ENCODE measurements at regions of chr2 and their contacts with region 1.

Region 1: DNA sequence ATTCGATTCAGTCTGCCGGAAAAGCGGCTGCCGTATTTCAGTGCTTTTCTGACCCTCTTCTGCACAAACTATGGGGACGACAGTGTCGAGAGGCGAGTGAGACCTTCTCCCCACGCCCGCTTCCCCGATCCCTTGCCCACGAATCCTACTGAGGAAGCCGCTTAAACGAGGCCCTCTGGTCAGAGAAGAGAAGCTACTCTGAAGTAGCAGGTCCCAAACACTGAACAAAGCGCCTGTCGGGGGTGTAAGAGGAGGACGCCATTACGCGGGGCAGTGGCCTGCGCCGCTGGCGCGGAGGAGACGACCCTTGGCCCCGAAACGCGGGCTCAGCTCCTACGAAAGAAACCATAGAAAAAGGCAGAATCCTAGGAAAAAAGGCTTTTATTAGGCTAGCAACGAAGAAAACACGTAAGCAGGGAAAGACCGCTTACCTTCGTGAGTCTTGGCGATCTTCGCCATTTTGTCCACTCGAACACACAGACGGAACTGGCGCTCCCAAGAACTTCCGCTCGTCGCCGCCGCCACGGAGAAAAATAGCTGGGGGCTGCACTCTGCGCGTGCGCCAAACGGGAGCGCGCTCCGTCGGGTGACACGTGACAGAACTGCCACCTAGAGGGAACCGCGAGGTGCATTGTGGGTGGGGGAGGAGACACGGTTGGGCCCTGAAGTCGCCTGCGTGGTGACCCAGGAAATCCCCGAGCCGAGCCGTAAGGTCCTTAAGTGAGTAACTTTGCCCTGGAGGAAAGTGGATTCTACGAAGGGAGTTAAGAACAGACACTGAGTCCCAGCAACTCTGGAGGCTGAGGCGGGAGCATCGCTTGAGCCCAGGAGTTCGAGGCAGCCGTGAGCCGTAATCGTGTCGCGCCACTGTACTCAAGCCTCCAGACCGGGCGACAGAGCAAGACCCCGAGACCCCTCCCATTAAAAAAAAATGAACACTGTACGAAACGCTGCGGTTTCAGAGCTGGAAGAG is at the start of gene SF3B1:
- DNase-seq: peak; percentile 97 to 100 (median 99)
- ATAC-seq: peak; percentile 94 to 97 (median 95)
- H3K4me3 ChIP-seq: peak within 1 kb of the TSS; percentile 79 to 100
- H3K4me3 Mint-ChIP-seq: peak within 1 kb of the TSS; percentile 94 to 99 (median 99)
- H3K27ac ChIP-seq: peak within 1 kb of the TSS; percentile 99
- H3K27ac Mint-ChIP-seq: peak within 1 kb of the TSS; percentile 100
- H3K4me1 ChIP-seq: peaks cover 30 to 31% of the 10 kb centered on the region in 2 experiments
- H3K4me1 Mint-ChIP-seq: peaks cover 55 to 58% (median 55%) of the 10 kb centered on the region in 3 donors
- H3K27me3 ChIP-seq: no peaks in the 10 kb centered on the region
- H3K27me3 Mint-ChIP-seq: no peaks in the 10 kb centered on the region
- total RNA-seq, gene SF3B1: 468 to 579 (median 497) TPM

Region 2: GRCh38 chr2:197345846-197346370 is 88.9 kb before region 1 on chr2:
- CTCF ChIA-PET with region 1: no interaction called
- POLR2A ChIA-PET with region 1: interaction called in 1 of 2 experiments, 10 read pairs
- DNase-seq: no peak
- ATAC-seq: no peak
- H3K4me3 ChIP-seq: no peak overlapping the region
- H3K4me3 Mint-ChIP-seq: no peak overlapping the region
- H3K27ac ChIP-seq: no peak overlapping the region
- H3K27ac Mint-ChIP-seq: no peak overlapping the region
- H3K4me1 ChIP-seq: no peaks in the 10 kb centered on the region
- H3K4me1 Mint-ChIP-seq: peaks cover 5 to 11% (median 9%) of the 10 kb centered on the region in 3 donors
- H3K27me3 ChIP-seq: no peaks in the 10 kb centered on the region
- H3K27me3 Mint-ChIP-seq: no peaks in the 10 kb centered on the region

Region 3: DNA sequence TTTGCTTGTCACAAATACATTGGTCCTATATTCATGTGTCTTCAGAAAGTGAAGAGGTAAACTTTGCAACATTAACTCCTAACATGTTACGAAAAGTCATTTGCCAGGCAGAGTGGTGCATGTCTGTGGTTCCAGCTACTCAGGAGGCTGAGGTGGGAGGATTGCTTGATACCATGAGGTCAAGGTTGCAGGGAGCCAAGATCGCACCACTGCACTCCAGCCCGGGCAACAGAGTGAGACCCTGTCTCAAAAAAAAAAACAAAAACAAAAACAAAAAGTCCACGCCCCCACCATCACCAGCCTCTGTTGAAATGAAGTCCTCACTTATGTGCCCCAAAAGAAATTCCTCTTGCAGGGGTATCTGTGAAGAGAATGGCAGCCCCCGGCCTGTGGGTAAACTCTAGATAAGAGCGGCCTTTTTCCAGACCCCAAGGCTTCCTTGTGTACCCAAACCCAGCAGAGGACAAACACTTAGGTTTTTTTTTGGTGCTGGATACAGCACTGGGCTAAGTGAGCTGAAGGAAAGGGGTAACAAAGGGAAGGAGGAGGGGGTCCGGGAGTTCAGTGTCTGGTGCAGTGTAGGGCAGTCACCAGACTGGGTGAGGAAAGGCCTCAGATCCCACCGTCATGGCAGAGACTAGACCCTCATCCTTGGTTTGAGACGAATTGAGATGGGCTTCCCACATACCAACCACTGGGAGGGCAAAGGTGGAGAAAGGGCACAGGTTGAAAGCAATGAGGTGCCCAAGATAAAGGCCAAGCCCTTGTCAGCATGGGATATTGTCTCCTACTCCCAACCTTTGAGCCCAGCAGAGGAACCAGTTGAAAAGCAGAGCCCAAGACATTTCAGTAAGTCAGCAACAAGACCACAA is 45.6 kb after region 1 on chr2:
- CTCF ChIA-PET with region 1: interaction called in 1 of 2 experiments, 7 read pairs
- POLR2A ChIA-PET with region 1: interaction called in 1 of 2 experiments, 16 read pairs
- DNase-seq: no peak
- ATAC-seq: peak in 1 of 4 experiments; percentile 26
- H3K4me3 ChIP-seq: no peak overlapping the region
- H3K4me3 Mint-ChIP-seq: no peak overlapping the region
- H3K27ac ChIP-seq: no peak overlapping the region
- H3K27ac Mint-ChIP-seq: peak overlapping the region in 1 of 2 donors; percentile 39
- H3K4me1 ChIP-seq: no peaks in the 10 kb centered on the region
- H3K4me1 Mint-ChIP-seq: no peaks in the 10 kb centered on the region
- H3K27me3 ChIP-seq: no peaks in the 10 kb centered on the region
- H3K27me3 Mint-ChIP-seq: no peaks in the 10 kb centered on the region

Region 4: DNA sequence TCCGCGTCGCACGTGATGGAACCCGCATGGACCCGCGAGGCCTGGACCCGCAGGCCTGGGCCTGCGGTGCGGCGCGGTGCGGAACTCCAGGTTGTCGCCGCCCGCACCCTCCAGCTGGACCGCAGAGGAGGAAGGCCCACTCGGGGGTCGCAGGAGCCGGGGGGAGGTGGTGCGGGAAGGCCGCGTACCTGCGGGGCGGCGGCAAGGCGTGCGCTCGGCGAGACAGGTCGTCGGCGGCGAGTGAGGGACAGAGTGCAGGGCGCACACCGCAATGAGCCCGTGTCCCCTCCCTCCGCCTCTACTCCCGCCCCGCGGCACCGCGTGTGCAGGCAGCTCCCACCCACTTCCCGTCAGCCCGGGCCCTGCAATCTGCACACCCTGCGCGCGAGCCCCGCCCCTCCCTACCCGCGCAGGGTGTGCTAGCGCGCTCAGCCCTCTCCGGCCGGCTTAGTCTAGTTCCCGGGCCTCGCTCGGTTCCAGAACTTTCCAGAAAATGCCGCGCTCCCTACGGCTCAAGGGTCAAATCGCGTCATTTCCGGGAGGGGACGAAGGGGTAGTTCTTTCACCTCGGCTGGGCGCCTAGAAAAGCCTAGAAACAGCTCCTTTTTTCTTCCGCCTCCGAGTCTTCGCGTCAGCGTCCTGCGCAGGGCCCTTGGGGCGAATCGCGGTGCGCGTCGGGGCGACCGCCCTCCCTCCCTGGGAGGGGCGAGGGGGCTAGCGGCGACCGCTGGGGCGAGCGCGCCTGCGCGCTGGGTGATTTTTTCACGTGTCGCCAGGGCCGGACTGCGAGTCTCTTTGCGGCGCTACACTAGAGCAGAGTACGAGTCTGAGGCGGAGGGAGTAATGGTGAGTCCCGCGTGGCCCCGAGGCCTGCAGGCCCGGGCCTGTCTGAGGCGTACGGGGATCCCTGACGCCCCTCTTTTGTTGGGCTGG is 65.0 kb after region 1 on chr2 and contains the starts of genes HSPD1 and HSPE1:
- CTCF ChIA-PET with region 1: no interaction called
- POLR2A ChIA-PET with region 1: interaction called, 3 to 13 read pairs
- DNase-seq: peak; percentile 91 to 98 (median 94)
- ATAC-seq: peak; percentile 80 to 90 (median 84)
- H3K4me3 ChIP-seq: peak within 1 kb of the TSS; percentile 64 to 91
- H3K4me3 Mint-ChIP-seq: peak within 1 kb of the TSS; percentile 92 to 97 (median 95)
- H3K27ac ChIP-seq: peak within 1 kb of the TSS; percentile 98
- H3K27ac Mint-ChIP-seq: peak within 1 kb of the TSS; percentile 91 to 98
- H3K4me1 ChIP-seq: peaks cover 23 to 31% of the 10 kb centered on the region in 2 experiments
- H3K4me1 Mint-ChIP-seq: peaks cover 66 to 70% (median 66%) of the 10 kb centered on the region in 3 donors
- H3K27me3 ChIP-seq: no peaks in the 10 kb centered on the region
- H3K27me3 Mint-ChIP-seq: no peaks in the 10 kb centered on the region
- total RNA-seq, gene HSPD1: 125 to 164 (median 130) TPM
- total RNA-seq, gene HSPE1: 49.9 to 72.7 (median 55.1) TPM

Measured in T-cell (primary cell).